PC-3 (cell line): ENCODE measurements at regions of chr1 and their contacts with region 1.

Region 1: GRCh38 chr1:164630626-164631396 is 71.8 kb downstream of the PBX1 start:
- DNase-seq: no peak
- ATAC-seq: no peak
- H3K4me3 ChIP-seq: no peak overlapping the region
- H3K27ac ChIP-seq: no peak overlapping the region
- H3K4me1 ChIP-seq: no peaks in the 10 kb centered on the region
- H3K27me3 ChIP-seq: no peaks in the 10 kb centered on the region
- CTCF ChIP-seq: no peak

Region 2: DNA sequence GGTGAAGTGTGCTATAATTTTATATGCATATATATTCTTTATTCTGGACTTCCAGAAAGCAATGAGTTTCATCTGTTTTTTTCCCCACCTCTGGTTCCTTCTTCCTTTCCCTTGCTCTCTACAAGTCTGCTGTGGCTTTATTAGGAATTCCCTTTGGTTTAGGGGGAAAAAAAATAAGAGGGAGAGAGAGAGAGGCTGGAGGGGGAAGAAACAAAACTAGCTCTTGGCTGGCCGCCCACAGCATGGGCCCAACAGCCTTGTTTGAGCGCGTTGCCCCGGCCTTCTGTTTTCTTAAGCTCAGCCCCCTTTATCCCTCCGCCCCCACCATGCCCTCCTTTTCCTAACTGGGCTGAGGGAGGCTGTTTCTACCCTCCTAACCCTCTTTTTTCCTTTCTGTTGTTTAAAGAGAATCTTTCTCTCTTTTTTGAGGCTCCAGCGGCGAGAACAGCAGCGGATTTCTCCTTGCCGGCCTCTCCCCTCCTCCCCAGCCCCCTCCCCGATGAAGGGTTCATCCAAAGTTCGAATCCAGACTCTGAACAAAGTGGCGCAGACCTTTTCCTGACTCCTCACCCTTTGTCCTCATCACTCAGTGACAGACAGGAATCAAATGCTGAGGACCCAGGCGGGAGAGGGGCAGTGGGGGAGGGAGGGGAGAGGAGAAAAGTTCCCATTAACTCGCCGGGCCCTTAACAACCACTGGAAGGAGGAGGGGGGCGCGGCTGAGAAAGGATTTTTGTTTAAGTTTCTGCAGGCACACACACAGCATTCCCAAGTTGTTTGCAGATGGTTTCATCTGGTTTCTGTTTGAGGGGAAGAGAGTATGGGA is 42.1 kb before region 1 on chr1:
- CTCF ChIA-PET with region 1: no interaction called
- POLR2A ChIA-PET with region 1: no interaction called
- intact Hi-C with region 1: no loop called
- DNase-seq: no peak
- ATAC-seq: no peak
- H3K4me3 ChIP-seq: no peak overlapping the region
- H3K27ac ChIP-seq: no peak overlapping the region
- H3K4me1 ChIP-seq: no peaks in the 10 kb centered on the region; the same call in 1 of the 2 replicates
- H3K27me3 ChIP-seq: no peaks in the 10 kb centered on the region
- CTCF ChIP-seq: no peak

Region 3: DNA sequence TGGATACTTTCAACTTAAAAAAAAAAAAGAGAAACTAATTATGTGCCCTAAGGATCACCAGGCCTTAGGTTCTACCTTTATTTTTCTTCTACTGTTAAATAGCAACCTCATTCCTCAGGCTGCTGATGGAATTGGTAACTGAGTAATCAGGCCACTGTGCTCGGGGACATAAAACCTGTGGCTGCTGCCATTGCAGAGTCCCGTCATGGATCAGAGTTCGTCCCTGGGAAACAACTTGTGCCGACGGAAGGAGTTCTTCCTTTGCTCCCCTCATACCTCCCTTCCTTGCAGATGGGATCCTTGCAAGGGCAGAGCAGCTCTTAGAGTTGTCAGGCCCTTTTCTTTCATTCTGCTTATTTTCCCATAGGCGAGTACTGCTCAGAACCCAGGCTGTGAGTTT is 51.8 kb after region 1 on chr1:
- CTCF ChIA-PET with region 1: interaction called, 14 read pairs
- POLR2A ChIA-PET with region 1: no interaction called
- intact Hi-C with region 1: no loop called
- DNase-seq: no peak
- ATAC-seq: no peak
- H3K4me3 ChIP-seq: no peak overlapping the region
- H3K27ac ChIP-seq: no peak overlapping the region
- H3K4me1 ChIP-seq: peaks cover 17% of the 10 kb centered on the region
- H3K27me3 ChIP-seq: no peaks in the 10 kb centered on the region
- CTCF ChIP-seq: no peak